ENCODE measurements at regions of chr16 and their contacts with region 1.

Region 1: DNA sequence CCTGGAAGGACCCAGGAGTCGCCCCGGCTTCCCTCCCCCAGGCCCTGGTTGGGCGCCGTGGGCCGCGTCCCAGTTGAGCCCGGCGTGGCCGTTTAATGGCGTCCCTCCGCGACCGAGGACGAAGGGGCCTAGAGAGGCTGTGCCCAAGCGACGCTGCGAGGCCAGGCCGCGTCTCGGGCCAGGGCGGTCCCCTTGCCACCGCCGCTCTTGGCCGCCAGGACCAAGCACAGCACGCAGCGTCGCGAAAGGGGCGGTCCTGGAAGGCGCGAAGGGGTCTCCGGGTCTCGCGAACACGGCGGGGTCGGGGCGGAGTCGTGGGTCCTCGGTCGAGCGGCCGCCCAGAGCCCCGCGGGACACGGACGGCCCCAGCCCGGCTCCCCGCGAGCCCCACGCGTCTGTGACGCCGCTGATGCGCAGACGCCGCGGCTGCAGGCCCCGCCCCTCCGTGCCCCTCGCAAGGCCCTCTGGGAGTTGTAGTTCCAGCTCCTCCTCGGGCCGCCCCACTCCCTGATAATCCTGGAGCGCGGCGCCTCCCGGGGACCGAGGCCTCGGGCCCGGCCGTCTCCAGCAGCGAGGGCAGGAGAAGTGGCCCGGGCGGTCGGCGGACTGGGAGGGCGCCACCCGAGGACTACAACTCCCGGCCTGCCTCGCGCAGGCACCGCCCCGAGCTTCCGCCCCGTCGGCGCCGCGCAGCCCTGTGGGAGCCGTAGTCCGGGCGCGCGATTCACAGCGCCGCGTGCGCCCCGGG is at the start of gene CAPN15:
- DNase-seq: peak; percentile 91
- ATAC-seq: peak; percentile 81
- H3K4me3 Mint-ChIP-seq: peak within 1 kb of the TSS; percentile 86
- H3K27ac Mint-ChIP-seq: peak within 1 kb of the TSS; percentile 82
- H3K4me1 Mint-ChIP-seq: peaks cover 43% of the 10 kb centered on the region
- H3K27me3 Mint-ChIP-seq: no peaks in the 10 kb centered on the region
- CTCF ChIP-seq: no peak
- total RNA-seq, gene CAPN15: 77.0 and 95.1 TPM in 2 replicates

Region 2: GRCh38 chr16:234468-235305 is 292.5 kb before region 1 on chr16 and contains the start of gene FAM234A:
- CTCF ChIA-PET with region 1: no interaction called
- POLR2A ChIA-PET with region 1: interaction called, 8 read pairs
- intact Hi-C with region 1: loop called (anchors 5 kb)
- DNase-seq: peak; percentile 98
- ATAC-seq: peak; percentile 85
- H3K4me3 Mint-ChIP-seq: peak within 1 kb of the TSS; percentile 98
- H3K27ac Mint-ChIP-seq: peak within 1 kb of the TSS; percentile 99
- H3K4me1 Mint-ChIP-seq: peaks cover 18% of the 10 kb centered on the region
- H3K27me3 Mint-ChIP-seq: no peaks in the 10 kb centered on the region
- CTCF ChIP-seq: no peak
- total RNA-seq, gene FAM234A: 45.9 and 49.6 TPM in 2 replicates

Region 3: GRCh38 chr16:381789-382717 is 145.1 kb before region 1 on chr16 and contains the start of gene PGAP6:
- CTCF ChIA-PET with region 1: no interaction called
- POLR2A ChIA-PET with region 1: no interaction called
- intact Hi-C with region 1: loop called (anchors 5 kb)
- DNase-seq: peak; percentile 73
- ATAC-seq: peak; percentile 67
- H3K4me3 Mint-ChIP-seq: peak within 1 kb of the TSS; percentile 89
- H3K27ac Mint-ChIP-seq: peak within 1 kb of the TSS; percentile 78
- H3K4me1 Mint-ChIP-seq: peaks cover 33% of the 10 kb centered on the region
- H3K27me3 Mint-ChIP-seq: no peaks in the 10 kb centered on the region
- CTCF ChIP-seq: no peak
- total RNA-seq, gene PGAP6: 38.4 and 44.5 TPM in 2 replicates

Region 4: DNA sequence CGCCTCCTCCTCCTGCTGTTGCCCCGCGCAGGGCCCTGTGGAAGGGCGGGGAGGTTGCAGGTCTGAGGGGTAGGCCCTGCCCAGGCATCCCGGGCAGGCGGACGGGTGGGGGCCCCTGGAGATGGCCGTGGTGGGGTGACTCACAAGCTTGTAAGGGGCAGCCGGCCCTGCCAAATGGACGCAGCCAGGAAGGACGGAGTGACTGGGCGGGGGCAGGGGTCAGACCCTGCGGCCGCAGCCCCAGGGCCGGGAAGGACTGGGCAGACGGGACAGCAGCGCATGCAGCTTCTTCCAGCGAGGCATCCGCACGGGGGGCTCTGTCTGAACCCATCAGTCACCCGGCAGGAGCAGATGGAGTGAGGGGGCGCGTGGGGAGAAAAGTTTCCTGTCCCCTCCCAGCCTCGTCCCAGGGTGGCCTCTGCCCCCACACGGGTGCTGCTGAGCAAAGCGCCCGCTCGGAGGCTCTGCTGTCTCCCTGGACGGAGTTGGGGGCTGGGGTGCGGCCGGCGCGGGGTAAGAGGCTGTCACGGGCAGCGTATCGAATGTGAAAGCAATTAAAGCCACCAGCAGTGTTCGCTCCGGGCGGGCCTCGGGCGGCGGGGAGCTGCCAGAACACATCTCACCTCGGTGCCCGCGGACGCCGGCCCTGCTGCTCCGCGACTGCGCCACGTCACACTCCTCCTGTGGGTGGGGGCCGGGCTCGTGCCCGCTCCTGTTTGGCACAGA is 27.6 kb after region 1 on chr16:
- CTCF ChIA-PET with region 1: no interaction called
- POLR2A ChIA-PET with region 1: no interaction called
- intact Hi-C with region 1: no loop called
- DNase-seq: no peak
- ATAC-seq: no peak
- H3K4me3 Mint-ChIP-seq: no peak overlapping the region
- H3K27ac Mint-ChIP-seq: no peak overlapping the region
- H3K4me1 Mint-ChIP-seq: peaks cover 2% of the 10 kb centered on the region
- H3K27me3 Mint-ChIP-seq: peaks cover 4% of the 10 kb centered on the region
- CTCF ChIP-seq: no peak

Region 5: DNA sequence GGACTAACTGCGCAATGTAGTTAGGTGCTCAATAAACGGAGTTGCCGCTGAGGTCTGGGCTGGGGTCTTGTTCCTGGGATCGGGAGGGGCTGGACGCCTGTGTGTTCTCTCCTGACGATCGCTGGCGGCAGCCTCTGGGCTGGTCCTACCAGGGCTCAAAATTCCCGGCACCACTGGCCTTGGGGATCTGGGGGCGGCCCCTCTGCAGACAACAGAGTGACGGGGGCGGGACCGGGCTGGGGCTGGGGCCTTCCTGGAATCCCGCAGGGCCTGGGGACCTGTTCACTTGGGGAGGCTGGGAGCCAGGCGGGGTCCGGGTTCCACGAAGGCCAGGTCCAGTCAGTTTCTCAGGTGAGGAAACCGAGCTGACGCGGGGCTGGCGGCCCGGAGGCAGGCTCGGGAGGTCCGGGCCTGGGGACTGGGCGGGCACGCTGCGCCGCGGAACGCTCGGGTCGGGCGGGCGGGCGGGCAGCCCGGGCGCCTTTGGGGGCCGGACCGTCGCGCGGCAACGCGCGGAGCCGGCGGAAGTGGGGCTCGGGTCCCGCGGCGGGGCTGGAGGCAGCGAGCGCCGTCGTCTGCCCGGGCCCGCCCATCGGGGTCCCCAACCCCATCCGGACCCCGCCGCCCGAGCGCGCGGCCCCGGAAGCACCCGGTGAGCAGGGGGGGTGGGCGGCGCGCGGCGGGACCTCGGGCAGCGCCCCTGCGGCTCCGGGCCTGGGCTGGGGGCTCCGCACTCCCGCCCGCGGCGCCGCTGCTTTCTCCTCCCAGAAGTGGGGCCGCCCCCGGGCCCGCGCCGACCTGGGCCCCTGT is 42.5 kb after region 1 on chr16 and contains the start of gene PIGQ:
- CTCF ChIA-PET with region 1: no interaction called
- POLR2A ChIA-PET with region 1: interaction called, 4 read pairs
- intact Hi-C with region 1: loop called (anchors 5 kb)
- DNase-seq: peak; percentile 71
- ATAC-seq: peak; percentile 76
- H3K4me3 Mint-ChIP-seq: peak within 1 kb of the TSS; percentile 89
- H3K27ac Mint-ChIP-seq: peak within 1 kb of the TSS; percentile 84
- H3K4me1 Mint-ChIP-seq: peaks cover 34% of the 10 kb centered on the region
- H3K27me3 Mint-ChIP-seq: no peaks in the 10 kb centered on the region
- CTCF ChIP-seq: no peak
- total RNA-seq, gene PIGQ: 46.7 and 53.1 TPM in 2 replicates

Region 6: DNA sequence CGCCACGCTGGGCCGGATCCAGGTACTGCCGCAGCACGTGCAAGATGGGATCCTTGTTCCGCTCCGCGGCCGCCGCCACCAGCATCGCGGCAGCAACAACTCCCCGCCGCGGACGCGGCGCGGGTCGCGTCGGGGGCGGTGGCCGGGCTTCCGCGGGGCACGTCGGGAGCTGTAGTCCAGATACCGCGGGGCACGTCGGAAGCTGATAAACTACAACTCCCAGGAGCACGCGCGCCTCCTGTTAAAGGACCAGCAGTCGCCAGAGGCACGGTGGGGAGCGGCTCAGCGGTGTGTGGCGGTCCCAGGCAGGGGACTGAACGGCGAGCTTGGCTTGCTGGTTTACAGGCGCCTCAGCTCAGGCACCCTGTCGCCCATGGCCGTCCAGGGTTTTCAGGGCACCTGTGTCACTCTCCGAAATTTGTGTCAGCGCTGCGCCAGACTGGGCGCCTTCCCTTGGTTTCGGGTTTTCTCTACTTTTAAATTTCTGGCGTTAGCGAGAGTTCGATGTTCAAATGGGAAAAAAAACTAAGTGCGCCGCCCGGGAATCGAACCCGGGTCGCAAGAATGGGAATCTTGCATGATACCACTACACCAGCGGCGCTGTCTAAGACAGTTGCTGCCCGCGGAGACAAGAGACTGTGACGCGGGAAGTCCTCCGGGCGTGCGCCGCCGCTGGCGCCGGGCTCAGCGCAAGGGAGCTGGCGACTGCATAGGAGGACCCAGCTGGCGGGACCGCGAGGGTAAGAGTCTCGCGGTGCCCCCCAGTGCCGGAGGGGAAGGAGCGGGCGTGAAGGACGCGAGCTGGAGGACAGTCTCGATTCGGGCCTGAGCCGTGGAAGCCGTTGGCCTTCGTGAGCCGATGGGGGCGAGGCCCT is 109.3 kb after region 1 on chr16 and contains the start of gene METTL26:
- CTCF ChIA-PET with region 1: no interaction called
- POLR2A ChIA-PET with region 1: interaction called, 3 read pairs
- intact Hi-C with region 1: loop called (anchors 1 kb)
- DNase-seq: peak; percentile 91
- ATAC-seq: peak; percentile 82
- H3K4me3 Mint-ChIP-seq: peak within 1 kb of the TSS; percentile 95
- H3K27ac Mint-ChIP-seq: peak within 1 kb of the TSS; percentile 97
- H3K4me1 Mint-ChIP-seq: peaks cover 30% of the 10 kb centered on the region
- H3K27me3 Mint-ChIP-seq: no peaks in the 10 kb centered on the region
- CTCF ChIP-seq: no peak
- total RNA-seq, gene METTL26: 48.7 and 49.9 TPM in 2 replicates

Region 7: GRCh38 chr16:684067-684794 is 157.1 kb after region 1 on chr16 and contains the start of gene JMJD8:
- CTCF ChIA-PET with region 1: no interaction called
- POLR2A ChIA-PET with region 1: no interaction called
- intact Hi-C with region 1: loop called (anchors 1 kb)
- DNase-seq: peak; percentile 98
- ATAC-seq: peak; percentile 49
- H3K4me3 Mint-ChIP-seq: peak within 1 kb of the TSS; percentile 87
- H3K27ac Mint-ChIP-seq: peak within 1 kb of the TSS; percentile 70
- H3K4me1 Mint-ChIP-seq: peaks cover 38% of the 10 kb centered on the region
- H3K27me3 Mint-ChIP-seq: no peaks in the 10 kb centered on the region
- CTCF ChIP-seq: no peak
- total RNA-seq, gene JMJD8: 41.4 and 47.0 TPM in 2 replicates